Endothelial cell of umbilical vein (primary cell): ENCODE measurements at regions of chr10 and their contacts with region 1.

Region 1: GRCh38 chr10:21495752-21496342 is 29.6 kb downstream of the SKIDA1 start:
- DNase-seq: peak; percentile 88
- H3K4me3 ChIP-seq: peak overlapping the region; percentile 79 to 94 (median 86)
- H3K27ac ChIP-seq: peak overlapping the region; percentile 49
- H3K4me1 ChIP-seq: peaks cover 12% of the 10 kb centered on the region
- H3K27me3 ChIP-seq: peaks cover 9 to 29% of the 10 kb centered on the region in 2 experiments
- CTCF ChIP-seq: peak; percentile 88 to 95
- POLR2A ChIP-seq: peak; percentile 64

Region 2: DNA sequence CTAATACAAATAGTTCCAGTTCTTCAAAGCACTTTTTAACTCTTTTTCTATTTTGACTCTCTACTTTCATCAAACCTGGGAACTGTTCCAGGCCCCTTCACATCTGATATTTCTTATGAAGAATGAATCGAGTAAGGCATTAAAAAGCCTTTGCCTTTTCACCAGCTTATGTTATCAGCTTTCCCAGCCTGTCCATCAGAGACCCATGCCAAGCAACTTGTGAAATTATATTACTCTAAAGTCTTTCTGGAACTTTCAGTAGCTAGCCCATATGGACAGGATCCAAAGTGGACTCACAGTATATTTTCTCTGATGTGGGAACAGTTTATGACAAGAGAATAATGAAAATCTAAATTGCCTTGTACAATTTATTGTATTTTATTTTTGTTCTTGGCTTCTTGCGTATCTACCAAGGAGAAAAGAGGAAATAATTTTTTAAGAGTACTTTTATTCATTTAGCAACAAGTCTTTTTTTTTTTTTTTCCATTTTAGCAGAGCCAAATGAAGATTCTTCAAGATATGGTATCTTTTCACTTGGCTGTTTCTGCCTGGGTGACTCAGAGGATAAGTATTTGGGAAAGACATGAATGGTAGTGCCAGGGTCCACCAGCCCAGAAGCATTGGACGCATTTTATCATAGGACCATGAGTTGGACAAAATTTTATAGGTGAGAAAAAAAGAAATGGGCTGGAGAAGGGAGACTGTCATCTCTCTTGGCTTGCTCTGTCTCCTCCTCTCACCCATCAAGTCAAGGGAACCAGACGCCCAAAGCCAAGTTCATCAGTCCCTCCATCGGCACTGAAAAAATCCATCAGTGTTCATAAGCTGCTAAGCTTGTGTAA is 402.9 kb before region 1 on chr10:
- CTCF ChIA-PET with region 1: no interaction called
- POLR2A ChIA-PET with region 1: no interaction called
- dilution Hi-C with region 1: no loop called
- intact Hi-C with region 1: no loop called
- DNase-seq: no peak
- H3K4me3 ChIP-seq: no peak overlapping the region
- H3K27ac ChIP-seq: no peak overlapping the region
- H3K4me1 ChIP-seq: no peaks in the 10 kb centered on the region
- H3K27me3 ChIP-seq: peaks cover 0 to 2% of the 10 kb centered on the region in 2 experiments
- CTCF ChIP-seq: no peak
- POLR2A ChIP-seq: no peak

Region 3: DNA sequence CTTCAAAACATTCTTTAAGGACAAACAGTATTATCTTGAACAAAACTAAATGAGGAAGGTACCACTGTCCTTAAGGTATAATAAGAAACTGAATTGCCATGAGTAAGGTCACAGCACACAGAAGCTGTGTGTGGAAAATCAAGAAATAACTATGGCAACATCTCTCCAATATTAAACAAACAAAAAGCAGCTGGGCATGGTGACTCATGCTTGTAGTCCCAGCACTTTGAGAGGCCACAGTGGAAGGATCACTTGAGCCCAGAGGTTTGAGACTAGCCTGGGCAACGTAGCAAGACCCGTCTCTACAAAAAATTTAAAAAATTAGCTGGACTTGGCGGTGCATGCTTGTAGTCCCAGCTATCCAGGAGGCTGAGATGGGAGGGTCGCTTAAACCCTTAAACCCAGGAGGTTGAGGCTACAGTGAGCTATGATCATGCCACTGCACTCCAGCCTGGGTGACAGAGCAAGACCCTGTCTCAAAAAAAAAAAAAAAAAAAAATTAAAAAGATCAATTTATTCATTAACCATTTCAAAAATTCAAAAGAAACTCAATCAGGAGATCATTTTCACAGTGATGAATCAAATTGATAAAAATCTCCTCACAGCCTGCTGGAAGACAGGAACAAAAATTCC is 165.7 kb before region 1 on chr10:
- CTCF ChIA-PET with region 1: interaction called, 9 read pairs
- POLR2A ChIA-PET with region 1: interaction called, 3 read pairs
- dilution Hi-C with region 1: no loop called
- intact Hi-C with region 1: loop called (anchors 1 kb)
- DNase-seq: peak; percentile 95
- H3K4me3 ChIP-seq: peak overlapping the region in 1 of 3 experiments; percentile 40
- H3K27ac ChIP-seq: peak overlapping the region; percentile 97
- H3K4me1 ChIP-seq: peaks cover 21% of the 10 kb centered on the region
- H3K27me3 ChIP-seq: no peaks in the 10 kb centered on the region
- CTCF ChIP-seq: no peak
- POLR2A ChIP-seq: no peak

Region 4: DNA sequence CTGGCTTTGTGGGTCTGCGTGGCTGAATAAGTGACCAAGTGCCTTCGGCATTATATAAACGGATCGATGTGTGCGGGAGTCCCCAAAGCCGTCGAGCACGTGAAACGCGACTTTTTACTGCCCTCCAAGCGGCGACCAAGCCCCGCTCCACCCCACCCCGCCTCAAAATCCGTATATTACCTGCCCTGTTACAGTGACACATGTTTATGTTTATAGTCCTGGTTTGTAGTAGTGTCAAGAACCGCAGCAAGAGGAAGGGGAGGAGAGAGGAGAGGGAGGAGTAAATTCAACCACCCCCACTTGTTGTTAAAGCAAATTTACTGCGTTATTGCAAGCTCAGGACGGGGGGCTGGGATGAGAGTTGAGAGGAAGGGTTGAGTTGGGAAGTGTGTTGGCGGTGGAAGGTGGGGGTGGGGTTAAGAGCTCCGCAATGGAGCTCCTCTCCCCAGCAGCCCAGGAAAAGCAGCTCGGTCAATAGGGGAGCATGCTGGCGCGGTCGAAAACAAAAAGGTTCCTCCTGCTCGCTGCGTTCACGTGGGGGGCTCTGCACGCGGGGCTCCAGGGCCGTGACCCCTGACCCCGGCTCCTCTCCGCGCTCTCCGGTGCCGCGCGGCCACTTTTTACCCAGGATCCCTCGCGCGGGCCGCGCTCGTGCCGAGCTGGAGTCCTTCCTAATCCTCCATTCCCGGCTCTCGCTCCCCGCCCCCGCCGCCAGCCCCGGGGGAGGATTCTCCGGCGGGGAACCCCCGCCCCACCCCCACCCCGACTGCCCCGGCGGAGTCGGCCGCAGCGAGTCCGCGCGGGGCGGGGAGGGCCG is 29.7 kb after region 1 on chr10 and contains the start of gene SKIDA1:
- CTCF ChIA-PET with region 1: interaction called, 38 read pairs
- POLR2A ChIA-PET with region 1: interaction called, 11 read pairs
- dilution Hi-C with region 1: no loop called
- intact Hi-C with region 1: loop called (anchors 1 kb)
- DNase-seq: peak; percentile 90
- H3K4me3 ChIP-seq: peak within 1 kb of the TSS; percentile 48 to 81 (median 53)
- H3K27ac ChIP-seq: peak within 1 kb of the TSS; percentile 97
- H3K4me1 ChIP-seq: peaks cover 29% of the 10 kb centered on the region
- H3K27me3 ChIP-seq: no peaks in the 10 kb centered on the region
- CTCF ChIP-seq: no peak
- POLR2A ChIP-seq: peak; percentile 71
- total RNA-seq, gene SKIDA1: 0.71 and 0.83 TPM in 2 replicates

Region 5: GRCh38 chr10:21732067-21732772 is 236.4 kb after region 1 on chr10:
- CTCF ChIA-PET with region 1: interaction called, 36 read pairs
- POLR2A ChIA-PET with region 1: no interaction called
- dilution Hi-C with region 1: no loop called
- intact Hi-C with region 1: loop called (anchors 1 kb)
- DNase-seq: peak; percentile 78
- H3K4me3 ChIP-seq: no peak overlapping the region
- H3K27ac ChIP-seq: no peak overlapping the region
- H3K4me1 ChIP-seq: peaks cover 20% of the 10 kb centered on the region
- H3K27me3 ChIP-seq: no peaks in the 10 kb centered on the region
- CTCF ChIP-seq: peak; percentile 93 to 95
- POLR2A ChIP-seq: no peak

Region 6: DNA sequence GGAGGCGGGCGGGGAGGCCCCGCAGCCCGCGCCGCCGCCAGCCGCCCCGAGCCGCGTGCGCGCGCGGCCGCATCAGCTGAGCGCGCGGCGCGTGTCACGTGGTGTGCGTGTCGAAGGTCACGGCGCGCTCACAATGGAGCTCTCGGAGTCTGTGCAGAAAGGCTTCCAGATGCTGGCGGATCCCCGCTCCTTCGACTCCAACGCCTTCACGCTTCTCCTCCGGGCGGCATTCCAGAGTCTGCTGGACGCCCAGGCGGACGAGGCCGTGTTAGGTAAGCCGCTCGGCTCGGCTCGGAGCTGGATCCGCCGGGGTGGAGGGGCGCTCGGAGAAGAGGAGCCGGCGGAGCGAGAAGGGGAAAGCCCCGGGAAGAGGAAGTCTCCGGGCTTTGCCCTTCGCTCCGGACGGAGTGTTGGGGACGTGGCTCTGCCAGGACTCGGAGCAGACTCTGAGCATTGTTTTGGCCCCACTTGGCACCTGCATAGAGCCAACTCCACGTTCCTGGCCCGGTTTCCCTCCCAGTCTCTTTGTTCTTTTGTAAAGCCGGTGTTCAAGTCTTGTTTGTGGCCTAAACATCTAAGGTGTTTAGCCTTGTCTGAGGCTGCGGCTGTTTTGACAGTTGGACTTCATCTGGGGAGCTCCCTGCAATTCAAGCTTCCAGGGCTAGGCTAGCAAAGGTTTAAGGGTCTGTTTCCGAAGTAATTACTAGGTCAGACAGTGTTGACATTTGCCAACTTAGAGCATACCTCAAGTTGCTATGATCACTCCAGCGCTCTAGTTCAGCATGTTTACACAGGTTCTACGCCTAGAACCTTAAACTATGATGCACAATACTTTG is 820.7 kb after region 1 on chr10 and contains the start of gene COMMD3:
- CTCF ChIA-PET with region 1: interaction called, 4 read pairs
- POLR2A ChIA-PET with region 1: no interaction called
- dilution Hi-C with region 1: no loop called
- intact Hi-C with region 1: loop called (anchors 5 kb)
- DNase-seq: peak; percentile 88
- H3K4me3 ChIP-seq: peak within 1 kb of the TSS; percentile 67 to 93 (median 83)
- H3K27ac ChIP-seq: peak within 1 kb of the TSS; percentile 69
- H3K4me1 ChIP-seq: peaks cover 17% of the 10 kb centered on the region
- H3K27me3 ChIP-seq: no peaks in the 10 kb centered on the region
- CTCF ChIP-seq: no peak
- POLR2A ChIP-seq: peak; percentile 89
- total RNA-seq, gene COMMD3: 48.9 and 49.8 TPM in 2 replicates

Region 7: GRCh38 chr10:22988581-22989360 is 1492.9 kb after region 1 on chr10:
- CTCF ChIA-PET with region 1: interaction called, 15 read pairs
- POLR2A ChIA-PET with region 1: no interaction called
- dilution Hi-C with region 1: no loop called
- intact Hi-C with region 1: loop called (anchors 5 kb)
- DNase-seq: peak; percentile 71
- H3K4me3 ChIP-seq: no peak overlapping the region
- H3K27ac ChIP-seq: no peak overlapping the region
- H3K4me1 ChIP-seq: no peaks in the 10 kb centered on the region
- H3K27me3 ChIP-seq: peaks cover 7 to 33% of the 10 kb centered on the region in 2 experiments
- CTCF ChIP-seq: peak; percentile 69 to 77
- POLR2A ChIP-seq: no peak